ENCODE measurements at regions of chr6 and their contacts with region 1.

Region 1: GRCh38 chr6:148593130-148593812 is 153.6 kb upstream of the UST start:
- DNase-seq: no peak
- ATAC-seq: peak; percentile 36
- H3K4me3 ChIP-seq: no peak overlapping the region
- H3K27ac ChIP-seq: peak overlapping the region in 3 of 4 donors; percentile 37 to 54 (median 38)
- H3K4me1 ChIP-seq: no peaks in the 10 kb centered on the region
- H3K27me3 ChIP-seq: no peaks in the 10 kb centered on the region
- CTCF ChIP-seq: no peak
- POLR2A ChIP-seq: no peak

Region 2: DNA sequence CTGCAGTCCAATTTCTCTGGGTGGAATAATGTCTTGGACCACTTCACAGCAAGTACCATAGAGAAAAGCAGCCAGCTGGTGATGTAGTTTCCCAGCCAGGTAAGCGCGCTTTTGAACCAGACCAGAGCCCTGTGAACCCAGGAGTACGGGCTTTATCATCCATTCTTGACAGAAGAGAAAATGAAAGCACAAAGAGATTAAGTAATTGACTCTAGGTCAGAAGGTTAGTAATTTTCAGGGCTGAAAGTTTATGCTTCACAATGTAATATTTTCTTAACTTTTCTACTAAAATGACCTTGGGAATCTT is 146.5 kb after region 1 on chr6:
- in situ Hi-C with region 1: loop called in 1 of 4 experiments (anchors 5 kb)
- intact Hi-C with region 1: no loop called
- DNase-seq: no peak
- ATAC-seq: no peak
- H3K4me3 ChIP-seq: no peak overlapping the region
- H3K27ac ChIP-seq: no peak overlapping the region
- H3K4me1 ChIP-seq: no peaks in the 10 kb centered on the region
- H3K27me3 ChIP-seq: no peaks in the 10 kb centered on the region
- CTCF ChIP-seq: no peak
- POLR2A ChIP-seq: no peak

Region 3: DNA sequence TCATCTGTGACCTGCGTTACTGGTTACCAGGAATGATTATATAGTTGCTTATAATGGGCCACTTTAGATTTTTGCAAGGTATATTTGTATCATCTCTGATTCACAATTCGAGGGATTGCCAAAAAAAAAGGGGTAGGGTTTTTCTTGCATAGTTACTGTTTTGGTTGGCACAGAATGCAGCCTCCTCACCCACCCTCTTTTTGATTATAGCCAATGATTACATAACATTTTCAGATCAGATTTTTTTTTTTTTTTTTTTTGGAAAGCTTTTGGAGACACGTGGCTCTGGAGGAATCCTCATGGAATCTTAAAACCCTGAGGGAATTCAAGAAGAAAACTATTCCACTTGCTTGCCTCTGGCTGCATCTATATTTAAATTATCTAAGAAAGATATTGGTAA is 207.3 kb after region 1 on chr6:
- in situ Hi-C with region 1: no loop called
- intact Hi-C with region 1: no loop called
- DNase-seq: no peak
- ATAC-seq: no peak
- H3K4me3 ChIP-seq: no peak overlapping the region
- H3K27ac ChIP-seq: no peak overlapping the region
- H3K4me1 ChIP-seq: no peaks in the 10 kb centered on the region
- H3K27me3 ChIP-seq: no peaks in the 10 kb centered on the region
- CTCF ChIP-seq: no peak
- POLR2A ChIP-seq: no peak

Measured in gastrocnemius medialis (tissue), 4 donors.